WTC11 (cell line): ENCODE measurements at regions of chr19 and their contacts with region 1.

Region 1: DNA sequence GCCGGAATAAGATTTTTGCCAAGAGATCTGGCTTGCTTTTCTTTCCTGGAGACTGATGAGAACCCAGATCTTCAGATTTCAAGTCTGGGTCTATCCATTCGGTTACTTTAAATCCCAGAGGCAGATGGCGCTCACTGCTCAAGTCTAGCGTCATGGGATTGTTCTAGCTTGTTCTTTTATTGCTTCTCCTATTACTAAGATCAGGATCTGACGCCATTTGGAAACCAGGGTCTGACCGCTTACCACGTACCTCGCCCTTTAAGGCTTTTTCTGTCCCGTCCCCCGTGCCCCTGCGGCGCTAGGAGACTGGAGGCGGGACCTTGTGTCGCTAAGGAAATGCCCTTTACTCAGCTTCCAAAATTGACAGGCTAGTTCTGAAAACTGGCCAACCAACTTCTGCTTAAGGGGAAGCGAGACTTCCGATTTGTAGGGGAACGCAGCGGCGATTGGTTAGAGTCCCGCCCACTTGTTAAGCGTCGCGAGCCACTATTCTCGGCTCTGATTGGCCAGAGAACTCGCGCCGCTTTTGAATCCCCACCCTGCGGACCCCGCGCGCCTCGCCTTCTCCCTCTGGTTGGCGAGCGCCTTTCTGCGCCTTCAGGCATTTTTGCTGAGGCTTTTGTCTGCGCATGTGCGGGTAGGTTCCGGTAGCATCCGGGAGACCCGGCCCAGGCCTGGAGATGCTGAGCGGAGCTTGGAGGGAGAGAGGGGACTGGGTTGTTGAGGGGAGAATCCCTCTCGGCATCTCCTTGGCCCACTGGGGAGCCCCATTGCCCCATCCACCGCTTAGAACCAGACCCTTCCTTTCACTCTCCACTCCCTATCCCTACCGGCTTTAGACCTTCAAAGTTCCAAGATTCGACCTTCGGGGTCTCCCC is 3.8 kb upstream of the C19orf84 start:
- DNase-seq: peak; percentile 98
- ATAC-seq: peak; percentile 92
- H3K4me3 Mint-ChIP-seq: peak overlapping the region; percentile 94
- H3K27ac Mint-ChIP-seq: peak overlapping the region; percentile 99
- H3K4me1 Mint-ChIP-seq: peaks cover 46% of the 10 kb centered on the region
- H3K27me3 Mint-ChIP-seq: no peaks in the 10 kb centered on the region
- CTCF ChIP-seq: no peak

Region 2: GRCh38 chr19:51367565-51368365 is 26.4 kb before region 1 on chr19:
- CTCF ChIA-PET with region 1: interaction called, 7 read pairs
- POLR2A ChIA-PET with region 1: interaction called, 13 read pairs
- DNase-seq: peak; percentile 100
- ATAC-seq: peak; percentile 88
- H3K4me3 Mint-ChIP-seq: peak overlapping the region; percentile 99
- H3K27ac Mint-ChIP-seq: no peak overlapping the region
- H3K4me1 Mint-ChIP-seq: peaks cover 30% of the 10 kb centered on the region
- H3K27me3 Mint-ChIP-seq: peaks cover 21% of the 10 kb centered on the region
- CTCF ChIP-seq: no peak

Region 3: DNA sequence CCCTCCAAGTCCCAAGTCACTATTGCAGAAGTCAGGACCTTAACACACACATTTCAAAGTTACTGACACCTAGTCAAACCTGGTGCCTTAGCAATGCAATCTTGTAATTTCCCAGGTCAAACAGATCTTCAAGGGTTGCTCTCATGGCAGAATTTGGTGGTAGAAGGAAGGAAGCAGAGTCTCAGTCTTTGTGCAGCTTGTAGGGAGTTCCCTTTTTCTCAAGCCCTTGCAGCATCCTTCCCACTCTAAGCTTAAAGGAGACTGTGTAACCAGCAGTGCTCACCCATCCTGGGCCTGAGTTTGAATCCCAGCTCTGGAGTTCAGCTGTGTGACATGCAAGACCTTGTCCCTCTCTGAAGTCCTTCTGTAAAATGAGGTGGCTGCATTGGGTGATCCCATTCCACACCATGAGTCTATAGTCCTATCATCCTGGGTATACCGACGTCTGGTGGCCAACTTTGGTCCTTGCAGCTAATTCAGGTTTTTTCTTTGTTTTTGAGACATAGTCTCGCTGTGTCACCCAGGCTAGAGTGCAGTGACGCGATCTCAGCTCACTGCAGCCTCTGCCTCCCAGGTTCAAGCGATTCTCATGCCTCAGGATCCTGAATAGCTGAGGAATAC is 13.4 kb after region 1 on chr19:
- CTCF ChIA-PET with region 1: interaction called, 16 read pairs
- POLR2A ChIA-PET with region 1: no interaction called
- DNase-seq: peak; percentile 47
- ATAC-seq: peak; percentile 87
- H3K4me3 Mint-ChIP-seq: no peak overlapping the region
- H3K27ac Mint-ChIP-seq: peak overlapping the region; percentile 85
- H3K4me1 Mint-ChIP-seq: peaks cover 32% of the 10 kb centered on the region
- H3K27me3 Mint-ChIP-seq: peaks cover 8% of the 10 kb centered on the region
- CTCF ChIP-seq: 0 out of 2 replicates have a peak, but pooled peaks have one; percentile 27